AG04450 (cell line): ENCODE measurements at regions of chr12 and their contacts with region 1.

Region 1: GRCh38 chr12:4526923-4527546 is 11.7 kb upstream of the RAD51AP1 start:
- DNase-seq: no peak
- H3K4me3 ChIP-seq: no peak overlapping the region
- H3K27ac ChIP-seq: no peak overlapping the region
- H3K27me3 ChIP-seq: no peaks in the 10 kb centered on the region
- CTCF ChIP-seq: peak; percentile 54

Region 2: GRCh38 chr12:4307593-4308333 is 219.3 kb before region 1 on chr12:
- CTCF ChIA-PET with region 1: interaction called, 31 read pairs
- POLR2A ChIA-PET with region 1: no interaction called
- DNase-seq: peak; percentile 55
- H3K4me3 ChIP-seq: peak overlapping the region; percentile 17; the same call in 1 of the 2 replicates
- H3K27ac ChIP-seq: no peak overlapping the region
- H3K27me3 ChIP-seq: peaks cover 14% of the 10 kb centered on the region
- CTCF ChIP-seq: peak; percentile 79

Region 3: GRCh38 chr12:4421590-4422031 is 105.4 kb before region 1 on chr12:
- CTCF ChIA-PET with region 1: interaction called, 35 read pairs
- POLR2A ChIA-PET with region 1: no interaction called
- DNase-seq: no peak
- H3K4me3 ChIP-seq: no peak overlapping the region
- H3K27ac ChIP-seq: no peak overlapping the region
- H3K27me3 ChIP-seq: peaks cover 20% of the 10 kb centered on the region
- CTCF ChIP-seq: peak; percentile 68

Region 4: DNA sequence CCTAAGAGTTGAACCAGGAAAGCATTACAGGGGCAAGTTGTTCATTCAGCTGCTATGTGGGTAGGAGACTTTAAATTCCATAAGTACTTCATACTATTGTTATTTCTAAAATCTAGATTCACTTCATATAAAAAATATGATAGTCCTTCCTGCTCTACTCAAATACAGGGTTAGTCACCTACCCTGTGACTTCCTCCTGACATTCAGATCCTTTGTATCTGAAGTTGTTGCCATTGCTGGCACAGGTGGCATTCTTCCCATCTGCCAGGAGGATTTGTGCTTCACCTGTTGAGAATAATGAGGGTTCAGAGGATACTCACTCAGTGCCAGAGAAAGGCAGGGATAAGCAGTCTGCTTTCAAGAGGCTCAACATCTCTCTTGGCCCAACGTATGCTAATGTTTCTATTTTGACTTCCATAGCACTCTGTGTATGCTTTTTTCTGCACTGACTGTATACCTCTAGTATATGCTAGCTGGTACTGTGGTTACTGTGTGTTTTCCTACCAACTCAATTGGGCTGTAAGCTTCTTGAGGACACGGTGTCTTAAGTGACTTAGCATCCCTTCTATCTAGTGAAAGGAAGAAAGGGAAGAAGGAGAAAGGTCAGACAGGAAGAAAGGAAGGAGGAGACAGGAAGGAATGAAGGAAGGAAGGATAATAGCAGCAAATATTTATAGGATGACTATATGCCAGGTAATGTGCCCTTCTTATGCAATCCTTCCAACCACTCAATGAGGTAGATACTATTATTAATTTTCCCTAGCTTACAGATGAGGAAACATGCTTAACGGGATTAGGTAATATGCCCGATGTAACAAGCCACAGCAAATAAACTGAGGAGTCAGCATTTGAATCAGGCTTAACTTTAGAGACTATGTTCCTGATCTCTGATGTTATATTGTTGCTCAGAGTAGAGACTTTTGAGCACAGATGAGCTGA is 42.9 kb before region 1 on chr12:
- CTCF ChIA-PET with region 1: no interaction called
- POLR2A ChIA-PET with region 1: no interaction called
- DNase-seq: no peak
- H3K4me3 ChIP-seq: no peak overlapping the region
- H3K27ac ChIP-seq: no peak overlapping the region
- H3K27me3 ChIP-seq: no peaks in the 10 kb centered on the region
- CTCF ChIP-seq: no peak

Region 5: GRCh38 chr12:4562034-4562657 is 35.1 kb after region 1 on chr12 and contains the start of gene DYRK4:
- CTCF ChIA-PET with region 1: no interaction called
- POLR2A ChIA-PET with region 1: no interaction called
- DNase-seq: peak; percentile 43
- H3K4me3 ChIP-seq: peak within 1 kb of the TSS; percentile 56
- H3K27ac ChIP-seq: no peak within 1 kb of the TSS
- H3K27me3 ChIP-seq: no peaks in the 10 kb centered on the region
- CTCF ChIP-seq: no peak
- polyA plus RNA-seq, gene DYRK4: 71.9 and 79.2 TPM in 2 replicates